ENCODE measurements at regions of chr1 and their contacts with region 1.

Region 1: DNA sequence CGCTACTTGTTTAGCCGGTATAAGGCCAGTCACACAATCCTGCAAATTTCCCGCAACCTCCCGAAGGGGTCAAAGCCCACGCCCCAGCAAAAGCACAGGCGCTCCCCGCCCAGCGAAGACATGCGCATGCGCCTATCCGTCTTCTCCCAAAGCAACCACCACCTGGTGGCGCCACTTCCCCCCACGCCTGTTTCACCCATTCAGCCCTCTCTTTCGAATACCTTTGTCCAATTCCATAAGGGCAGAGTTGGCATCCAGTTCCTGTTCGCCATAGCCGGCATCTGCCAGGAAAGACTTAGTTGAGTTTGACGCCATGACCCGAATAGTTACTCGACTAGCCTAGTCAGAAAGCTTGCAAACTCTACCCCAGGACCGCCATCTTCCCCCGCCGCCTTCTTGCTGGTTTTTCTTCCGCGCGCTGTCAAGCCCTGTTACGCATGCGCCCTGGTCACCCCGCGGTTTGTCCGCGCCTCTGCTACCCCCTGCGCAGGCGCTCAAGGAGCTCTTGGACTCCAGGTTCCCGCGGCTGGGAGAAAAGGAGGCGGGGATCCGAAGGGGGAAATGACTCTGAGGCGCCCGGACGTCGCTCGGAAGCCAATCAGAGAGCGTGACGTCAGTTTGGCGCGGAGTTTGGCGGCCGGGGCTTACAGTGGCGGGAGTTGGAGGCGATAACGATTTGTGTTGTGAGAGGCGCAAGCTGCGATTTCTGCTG is at the starts of genes DTL and INTS7:
- DNase-seq: peak; percentile 98
- CTCF ChIP-seq: peak; percentile 80

Region 2: DNA sequence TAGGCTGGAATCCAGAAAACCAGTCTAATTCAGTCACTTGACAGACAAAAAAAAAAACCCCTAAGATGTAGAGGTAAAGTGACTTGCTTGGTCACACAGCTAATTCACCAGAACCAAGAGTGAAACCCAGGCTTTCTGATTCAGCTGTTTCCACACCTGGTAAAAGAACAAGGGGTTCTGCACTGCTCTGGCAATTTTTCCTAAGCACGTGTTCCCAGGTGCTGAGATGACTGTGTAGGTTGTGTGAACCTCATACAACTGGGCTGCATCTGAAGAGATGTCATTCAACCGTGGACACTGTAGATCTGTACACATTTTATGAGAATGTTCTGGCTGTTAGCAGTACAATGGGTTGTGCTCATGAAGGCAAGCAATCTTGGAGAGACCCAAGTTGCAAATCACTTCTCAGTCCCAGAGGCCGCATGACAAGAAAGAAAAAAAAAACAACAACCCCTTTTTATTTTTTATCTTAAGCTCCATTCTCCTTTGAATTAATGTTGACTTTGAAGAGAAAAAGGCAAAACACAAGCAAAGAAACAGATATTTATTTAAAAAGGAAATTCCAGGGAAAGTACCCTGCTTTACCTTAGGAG is 95.3 kb before region 1 on chr1:
- CTCF ChIA-PET with region 1: interaction called, 16 read pairs
- POLR2A ChIA-PET with region 1: no interaction called
- DNase-seq: peak; percentile 73
- CTCF ChIP-seq: no peak

Region 3: DNA sequence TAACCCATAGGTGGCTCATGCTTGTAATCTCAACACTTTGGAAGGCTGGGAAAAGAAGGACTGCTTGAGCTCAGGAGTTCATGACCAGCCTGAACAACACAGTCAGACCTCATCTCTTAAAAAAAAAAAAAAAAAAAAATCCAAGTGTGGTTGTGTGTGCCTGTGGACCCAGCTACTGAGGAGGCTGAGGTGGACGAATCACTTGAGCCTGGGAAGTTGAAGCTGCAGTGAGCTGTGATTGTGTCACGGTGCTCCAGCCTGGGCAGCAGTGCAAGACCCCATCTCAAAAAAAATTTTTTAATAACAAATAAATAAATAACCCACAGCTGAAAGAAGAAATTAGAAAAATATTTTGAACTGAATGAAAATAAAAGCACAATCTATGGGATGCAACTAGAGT is 13.7 kb before region 1 on chr1:
- CTCF ChIA-PET with region 1: interaction called, 69 read pairs
- POLR2A ChIA-PET with region 1: no interaction called
- DNase-seq: no peak
- CTCF ChIP-seq: no peak

Region 4: DNA sequence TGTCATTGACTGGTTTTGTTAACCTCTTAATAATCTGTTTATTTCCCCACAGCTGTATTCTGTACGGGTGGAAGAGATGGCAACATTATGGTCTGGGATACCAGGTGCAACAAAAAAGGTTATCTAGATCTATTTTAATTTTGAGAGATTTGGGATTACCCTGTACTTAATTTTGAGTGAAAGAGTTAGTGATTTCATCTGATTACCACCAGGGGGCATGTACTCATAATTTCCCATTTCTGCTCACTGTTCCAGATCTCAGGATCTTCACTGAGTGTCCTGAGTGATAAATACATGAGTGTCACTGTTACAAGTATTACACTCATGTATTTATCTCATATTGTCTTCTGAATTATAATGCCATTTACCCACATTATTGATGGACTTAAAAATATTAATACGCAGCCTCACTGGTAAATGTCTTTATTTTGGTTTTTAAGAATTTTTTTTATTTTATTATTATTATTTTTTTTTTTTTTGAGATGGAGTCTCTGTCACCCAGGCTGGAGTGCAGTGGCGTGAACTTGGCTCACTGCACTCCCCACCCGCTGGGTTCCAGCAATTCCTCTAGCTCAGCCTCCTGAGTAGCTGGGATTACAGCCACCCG is 27.7 kb after region 1 on chr1:
- CTCF ChIA-PET with region 1: interaction called, 34 read pairs
- POLR2A ChIA-PET with region 1: no interaction called
- DNase-seq: peak; percentile 28
- CTCF ChIP-seq: peak; percentile 49

Region 5: GRCh38 chr1:212285685-212286436 is 250.6 kb after region 1 on chr1:
- CTCF ChIA-PET with region 1: interaction called, 13 read pairs
- POLR2A ChIA-PET with region 1: no interaction called
- DNase-seq: peak; percentile 58
- CTCF ChIP-seq: no peak

Region 6: DNA sequence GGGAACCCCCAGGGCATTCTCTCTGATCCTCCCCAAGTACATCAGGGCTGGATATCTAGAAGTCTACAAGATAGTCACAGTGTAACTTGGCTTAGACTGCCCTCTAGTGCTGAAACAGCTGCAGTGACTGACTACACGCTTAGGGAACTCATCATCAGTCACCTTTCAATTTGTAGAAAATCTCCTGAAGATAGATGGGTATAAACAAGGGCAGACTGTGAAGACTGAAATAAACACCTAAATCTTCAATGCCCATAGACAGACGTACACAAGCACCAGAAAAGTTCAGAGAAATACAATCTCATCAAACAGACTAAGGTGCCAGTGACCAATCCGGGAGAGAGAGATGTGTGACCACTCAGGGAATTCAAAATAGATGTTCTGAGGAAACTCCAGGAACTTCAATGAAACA is 332.8 kb after region 1 on chr1:
- CTCF ChIA-PET with region 1: interaction called, 16 read pairs
- POLR2A ChIA-PET with region 1: interaction called, 3 read pairs
- DNase-seq: peak; percentile 67
- CTCF ChIP-seq: peak; percentile 56

Region 7: GRCh38 chr1:212738330-212738729 is 703.1 kb after region 1 on chr1:
- CTCF ChIA-PET with region 1: no interaction called
- POLR2A ChIA-PET with region 1: no interaction called
- DNase-seq: no peak
- CTCF ChIP-seq: no peak